ENCODE measurements at regions of chr1 and their contacts with region 1.

Region 1: DNA sequence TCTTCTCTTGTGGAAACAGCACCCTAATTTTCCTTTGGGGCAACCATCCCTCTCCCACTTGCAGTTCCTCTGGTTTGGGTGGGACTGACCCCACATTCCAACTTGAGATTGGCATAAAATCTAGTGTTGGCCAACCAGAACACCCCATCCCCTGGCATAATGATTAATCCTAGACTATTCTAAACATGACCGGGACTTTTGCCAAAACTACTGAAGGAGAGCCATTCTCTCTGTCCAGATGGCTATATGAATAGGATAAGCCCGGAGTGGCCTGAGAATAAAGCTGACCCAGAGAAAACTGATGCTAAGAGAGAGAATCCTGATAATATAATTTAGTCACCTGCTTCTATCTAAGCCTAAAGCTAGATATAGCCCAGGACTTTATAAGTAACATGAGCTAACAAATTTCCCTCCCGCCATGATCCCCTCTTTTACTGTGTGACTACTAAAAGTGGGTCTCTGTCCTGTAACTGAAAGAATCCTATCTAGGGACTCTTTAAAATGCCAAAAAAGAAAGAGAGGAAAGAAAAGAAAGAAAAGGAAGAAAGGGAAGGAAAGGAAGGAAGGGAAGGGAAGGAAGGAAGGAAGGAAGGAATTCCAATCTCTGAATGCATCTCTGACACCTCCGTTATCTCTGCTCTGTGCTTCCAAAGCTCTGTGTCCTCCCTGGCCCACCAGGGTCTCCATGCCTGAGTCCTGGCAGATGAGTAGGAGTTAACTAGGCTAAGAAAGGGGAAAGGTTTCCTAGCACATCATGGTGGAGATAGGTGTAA is 28.0 kb upstream of the NRDC start:
- DNase-seq: no peak
- H3K4me3 ChIP-seq: no peak overlapping the region
- H3K27ac ChIP-seq: no peak overlapping the region
- H3K4me1 ChIP-seq: no peaks in the 10 kb centered on the region
- H3K27me3 ChIP-seq: peaks cover 3% of the 10 kb centered on the region
- CTCF ChIP-seq: no peak
- POLR2A ChIP-seq: no peak

Region 2: GRCh38 chr1:51989723-51990477 is 83.4 kb after region 1 on chr1:
- intact Hi-C with region 1: loop called in 1 of 2 experiments (anchors 5 kb)
- DNase-seq: no peak
- H3K4me3 ChIP-seq: peak overlapping the region in 2 of 4 donors; percentile 15 to 60
- H3K27ac ChIP-seq: no peak overlapping the region
- H3K4me1 ChIP-seq: no peaks in the 10 kb centered on the region
- H3K27me3 ChIP-seq: peaks cover 6% of the 10 kb centered on the region
- CTCF ChIP-seq: no peak
- POLR2A ChIP-seq: no peak

Measured in adrenal gland (tissue), 19 donors.